ENCODE measurements at regions of chrX and their contacts with region 1.

Region 1: GRCh38 chrX:103817502-103817901 is 14.6 kb downstream of the RAB9B start:
- DNase-seq: no peak

Region 2: DNA sequence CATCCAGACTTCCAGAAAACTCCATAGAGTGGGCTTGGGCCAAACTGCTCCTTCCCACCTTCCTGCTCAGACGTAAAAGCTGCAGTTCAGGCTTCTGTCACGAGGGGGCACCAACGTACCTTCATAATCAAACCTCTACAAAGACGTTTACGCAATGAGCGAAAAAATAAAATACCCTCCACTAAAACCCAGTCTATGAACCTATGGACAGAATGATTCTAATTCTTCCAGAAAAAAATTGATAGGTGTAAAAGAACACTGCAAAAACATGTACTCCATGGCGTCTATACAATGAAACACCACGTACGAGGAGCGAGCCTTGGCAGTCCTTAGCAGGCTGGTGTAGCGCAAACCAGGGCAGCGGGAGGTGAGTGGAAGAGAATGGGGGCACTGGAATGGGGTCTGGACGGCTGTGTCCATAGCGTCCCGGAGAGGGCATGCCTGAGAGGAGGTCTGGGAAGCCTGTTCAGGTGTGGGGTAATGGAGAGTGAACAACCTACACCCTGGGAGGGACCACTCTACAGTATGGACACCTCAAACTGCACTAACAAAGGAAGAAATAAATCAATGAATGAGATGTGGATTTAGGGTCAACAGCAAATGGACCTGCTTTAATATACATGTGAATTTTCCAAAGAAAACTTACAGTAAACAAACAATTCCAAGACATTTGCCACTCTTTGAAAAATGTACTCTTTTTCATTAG is 283.8 kb before region 1 on chrX:
- intact Hi-C with region 1: loop called (anchors 5 kb)
- DNase-seq: peak; percentile 80

Region 3: GRCh38 chrX:103774070-103774642 is 43.3 kb before region 1 on chrX:
- intact Hi-C with region 1: no loop called
- DNase-seq: no peak

Measured in cardiac septum (tissue), 1 donor.